Activated B cell treated with CpG ODN at 0.5 μM for 24 hours (primary cell): ENCODE measurements at regions of chr14 and their contacts with region 1.

Region 1: GRCh38 chr14:89589400-89590118 is 172.5 kb upstream of the FOXN3 start:
- DNase-seq: peak; percentile 24
- ATAC-seq: peak; percentile 84
- H3K4me3 Mint-ChIP-seq: peak overlapping the region; percentile 55
- H3K27ac Mint-ChIP-seq: peak overlapping the region; percentile 85
- H3K4me1 Mint-ChIP-seq: peaks cover 45% of the 10 kb centered on the region
- H3K27me3 Mint-ChIP-seq: no peaks in the 10 kb centered on the region
- CTCF ChIP-seq: no peak

Region 2: GRCh38 chr14:89098254-89098653 is 491.3 kb before region 1 on chr14:
- CTCF ChIA-PET with region 1: no interaction called
- POLR2A ChIA-PET with region 1: no interaction called
- intact Hi-C with region 1: no loop called
- DNase-seq: no peak
- ATAC-seq: no peak
- H3K4me3 Mint-ChIP-seq: no peak overlapping the region
- H3K27ac Mint-ChIP-seq: no peak overlapping the region
- H3K4me1 Mint-ChIP-seq: no peaks in the 10 kb centered on the region
- H3K27me3 Mint-ChIP-seq: peaks cover 13% of the 10 kb centered on the region
- CTCF ChIP-seq: no peak

Region 3: DNA sequence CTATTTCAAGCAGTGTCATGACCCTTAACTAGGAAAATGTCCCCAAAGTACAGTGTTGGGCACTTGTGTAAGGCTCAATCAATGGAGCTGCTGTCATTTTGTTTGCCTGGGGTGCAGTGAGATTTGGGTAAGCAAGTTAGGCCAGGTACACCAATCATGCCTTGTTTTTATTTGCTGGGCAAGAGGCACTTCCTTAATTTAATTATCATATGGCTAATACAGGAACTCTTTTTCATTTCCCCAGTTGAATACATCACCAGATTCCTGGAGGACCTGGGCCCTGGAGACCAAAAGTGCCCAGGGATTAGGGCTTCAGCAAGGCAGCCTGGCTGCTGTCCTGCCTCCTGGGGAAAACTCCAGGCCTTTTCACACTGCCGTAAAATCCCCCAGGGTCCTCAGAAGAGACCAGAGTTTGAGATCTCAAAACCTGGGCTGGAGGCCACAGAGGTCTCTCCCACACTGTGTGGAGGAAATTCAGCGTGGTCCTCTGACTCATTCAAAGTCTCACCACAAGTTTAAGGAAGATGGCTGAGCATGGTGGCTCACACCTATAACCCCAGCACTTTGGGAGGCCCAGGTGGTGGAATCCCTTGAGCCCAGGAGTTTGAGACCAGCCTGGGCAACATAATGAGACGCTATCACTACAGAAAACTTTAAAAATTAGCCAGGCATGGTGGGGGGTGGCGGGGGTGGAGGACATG is 144.1 kb before region 1 on chr14:
- CTCF ChIA-PET with region 1: no interaction called
- POLR2A ChIA-PET with region 1: interaction called, 11 read pairs
- intact Hi-C with region 1: no loop called
- DNase-seq: no peak
- ATAC-seq: peak; percentile 65
- H3K4me3 Mint-ChIP-seq: peak overlapping the region; percentile 55
- H3K27ac Mint-ChIP-seq: peak overlapping the region; percentile 85
- H3K4me1 Mint-ChIP-seq: peaks cover 78% of the 10 kb centered on the region
- H3K27me3 Mint-ChIP-seq: no peaks in the 10 kb centered on the region
- CTCF ChIP-seq: no peak

Region 4: DNA sequence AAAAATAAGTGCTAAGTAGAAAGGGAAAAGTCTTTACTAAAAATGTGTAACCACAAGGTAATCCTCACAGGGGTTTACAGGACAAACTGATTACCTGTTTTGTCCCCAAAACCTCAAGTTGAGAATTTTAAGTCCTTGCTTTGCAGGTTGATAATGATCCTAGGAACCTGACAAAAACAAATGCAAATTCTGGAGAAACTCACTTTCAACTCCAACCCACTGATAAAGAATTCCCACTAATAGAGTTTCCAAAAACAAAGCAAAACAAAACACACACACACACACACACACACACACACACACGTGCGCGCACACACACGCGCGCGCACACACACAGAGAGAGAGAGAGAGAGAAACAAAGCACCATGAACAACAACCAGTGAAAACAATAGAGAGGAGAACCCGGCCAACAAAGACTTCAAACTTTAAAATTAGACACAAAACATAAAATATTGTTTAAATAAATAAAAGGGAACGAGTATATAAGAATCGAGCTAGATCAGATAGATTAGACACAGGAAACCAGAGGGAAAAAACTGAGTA is 14.4 kb after region 1 on chr14:
- CTCF ChIA-PET with region 1: no interaction called
- POLR2A ChIA-PET with region 1: no interaction called
- intact Hi-C with region 1: loop called (anchors 2 kb)
- DNase-seq: no peak
- ATAC-seq: no peak
- H3K4me3 Mint-ChIP-seq: no peak overlapping the region
- H3K27ac Mint-ChIP-seq: no peak overlapping the region
- H3K4me1 Mint-ChIP-seq: peaks cover 15% of the 10 kb centered on the region
- H3K27me3 Mint-ChIP-seq: no peaks in the 10 kb centered on the region
- CTCF ChIP-seq: no peak

Region 5: GRCh38 chr14:89701211-89702043 is 111.9 kb after region 1 on chr14:
- CTCF ChIA-PET with region 1: no interaction called
- POLR2A ChIA-PET with region 1: no interaction called
- intact Hi-C with region 1: no loop called
- DNase-seq: peak; percentile 81
- ATAC-seq: peak; percentile 95
- H3K4me3 Mint-ChIP-seq: peak overlapping the region; percentile 77
- H3K27ac Mint-ChIP-seq: peak overlapping the region; percentile 86
- H3K4me1 Mint-ChIP-seq: peaks cover 28% of the 10 kb centered on the region
- H3K27me3 Mint-ChIP-seq: no peaks in the 10 kb centered on the region
- CTCF ChIP-seq: no peak